Left ventricle myocardium inferior (tissue), 1 donor: ENCODE measurements at regions of chr18 and their contacts with region 1.

Region 1: DNA sequence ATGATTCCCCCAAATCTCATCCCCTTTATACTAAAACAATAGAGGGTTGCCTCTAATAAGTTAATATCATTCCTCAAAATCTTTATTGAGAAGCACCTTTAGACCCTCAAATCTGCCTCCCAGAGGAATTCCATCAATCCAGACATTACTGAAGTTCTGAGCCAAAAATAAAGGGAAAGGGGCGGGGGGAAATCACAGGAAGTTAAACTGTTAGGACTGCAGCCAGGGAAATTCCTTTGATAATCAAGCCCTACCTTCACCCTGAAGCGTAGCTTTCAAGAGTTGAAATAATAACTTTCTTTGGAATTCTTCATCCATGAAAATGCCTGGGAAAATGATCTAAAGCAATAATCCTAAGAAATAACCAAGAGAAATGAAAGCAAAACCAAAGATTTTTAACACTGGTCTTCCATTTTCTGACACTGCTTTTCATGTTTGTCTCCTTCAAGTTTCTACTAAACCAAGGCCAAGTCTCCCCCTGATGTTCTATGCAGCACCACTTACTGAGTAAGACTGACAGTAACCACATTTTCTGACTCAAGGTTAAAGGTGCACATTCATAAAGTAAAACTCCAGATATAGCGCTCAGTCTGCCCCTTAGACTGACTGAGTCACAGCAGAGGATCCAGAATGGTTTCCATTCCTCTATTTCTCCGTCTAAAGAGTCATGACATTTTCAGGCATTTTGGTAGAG is 78.2 kb downstream of the TCF4 start:
- DNase-seq: no peak
- H3K4me3 ChIP-seq: peak overlapping the region; percentile 48
- H3K27ac ChIP-seq: peak overlapping the region; percentile 89
- H3K4me1 ChIP-seq: peaks cover 69% of the 10 kb centered on the region
- H3K27me3 ChIP-seq: no peaks in the 10 kb centered on the region
- CTCF ChIP-seq: no peak

Region 2: GRCh38 chr18:55322178-55322735 is 187.5 kb before region 1 on chr18:
- intact Hi-C with region 1: loop called (anchors 10 kb)
- DNase-seq: peak; percentile 87
- H3K4me3 ChIP-seq: peak overlapping the region; percentile 76
- H3K27ac ChIP-seq: peak overlapping the region; percentile 98
- H3K4me1 ChIP-seq: peaks cover 63% of the 10 kb centered on the region
- H3K27me3 ChIP-seq: no peaks in the 10 kb centered on the region
- CTCF ChIP-seq: peak; percentile 34

Region 3: DNA sequence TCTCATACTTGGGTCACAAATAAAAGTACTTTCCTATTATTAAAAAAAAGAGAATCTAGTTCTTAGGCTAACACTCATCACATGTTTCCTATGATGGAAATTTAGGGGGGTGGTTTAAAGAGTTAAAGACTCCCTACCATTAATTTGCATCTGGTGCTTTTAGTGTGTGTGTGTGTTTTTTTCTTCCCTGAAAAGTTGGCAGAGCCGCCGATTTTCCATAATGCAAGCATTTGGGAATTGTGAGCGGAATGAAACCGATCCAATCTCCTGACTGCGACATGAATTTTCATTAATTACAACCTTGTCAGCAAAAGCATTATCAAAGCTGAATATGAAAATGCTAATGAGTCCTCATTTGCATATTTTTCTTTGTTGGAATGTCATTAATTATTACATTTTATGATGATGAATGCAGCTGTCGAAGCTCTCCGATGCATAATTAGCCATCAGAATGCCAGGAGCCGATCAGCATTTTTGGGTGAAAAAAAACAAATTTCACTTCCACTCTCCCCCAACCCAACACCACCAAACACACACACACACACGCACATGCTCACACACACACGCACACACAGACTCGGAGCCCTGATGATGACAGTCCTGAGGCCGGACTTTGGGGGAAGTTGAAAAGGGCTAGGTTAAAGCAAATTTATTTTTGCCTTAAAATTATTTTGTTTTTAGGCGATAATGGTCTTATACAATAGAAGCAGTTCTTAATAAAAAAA is 87.2 kb before region 1 on chr18:
- intact Hi-C with region 1: loop called (anchors 10 kb)
- DNase-seq: peak; percentile 32
- H3K4me3 ChIP-seq: peak overlapping the region; percentile 61
- H3K27ac ChIP-seq: peak overlapping the region; percentile 88
- H3K4me1 ChIP-seq: peaks cover 38% of the 10 kb centered on the region
- H3K27me3 ChIP-seq: no peaks in the 10 kb centered on the region
- CTCF ChIP-seq: no peak

Region 4: GRCh38 chr18:55435592-55435991 is 74.2 kb before region 1 on chr18:
- intact Hi-C with region 1: no loop called
- DNase-seq: no peak
- H3K4me3 ChIP-seq: no peak overlapping the region
- H3K27ac ChIP-seq: no peak overlapping the region
- H3K4me1 ChIP-seq: peaks cover 37% of the 10 kb centered on the region
- H3K27me3 ChIP-seq: no peaks in the 10 kb centered on the region
- CTCF ChIP-seq: no peak

Region 5: DNA sequence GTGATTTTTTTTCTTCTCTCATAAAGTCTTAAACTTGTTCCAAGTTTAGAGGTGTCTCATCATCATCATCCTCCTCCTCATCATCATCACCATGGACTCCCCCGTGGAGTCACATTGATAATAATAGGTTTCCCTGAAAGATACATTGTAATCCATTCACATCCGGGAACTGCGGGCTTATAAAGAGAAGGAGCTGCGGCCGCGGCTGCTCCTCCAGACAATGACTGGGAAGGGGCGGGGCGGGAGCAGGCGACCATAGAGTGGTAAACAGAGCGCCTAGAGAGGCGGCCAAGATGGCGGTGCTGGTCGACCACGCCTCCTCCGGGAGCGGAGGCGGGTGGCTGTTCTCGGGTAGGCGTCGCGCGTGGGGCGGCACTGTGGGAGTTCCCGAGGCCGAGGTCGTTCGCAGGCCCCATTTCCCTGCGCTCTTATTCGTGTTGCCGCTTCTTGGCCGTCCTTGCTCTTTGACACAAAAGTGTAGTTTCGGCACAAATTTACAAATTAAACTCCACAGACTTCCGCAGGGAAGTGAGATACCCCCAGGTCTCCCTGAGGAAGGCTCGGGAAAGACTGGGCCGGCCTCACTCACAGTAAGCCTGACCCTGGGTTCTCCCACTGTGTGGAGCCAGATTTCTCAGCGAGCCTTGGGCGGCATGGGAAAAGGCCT is 80.0 kb after region 1 on chr18:
- intact Hi-C with region 1: loop called (anchors 10 kb)
- DNase-seq: peak; percentile 98
- H3K4me3 ChIP-seq: peak overlapping the region; percentile 80
- H3K27ac ChIP-seq: peak overlapping the region; percentile 90
- H3K4me1 ChIP-seq: peaks cover 39% of the 10 kb centered on the region
- H3K27me3 ChIP-seq: no peaks in the 10 kb centered on the region
- CTCF ChIP-seq: no peak